Activated B cell treated with CpG ODN at 0.5 μM for 24 hours (primary cell): ENCODE measurements at regions of chr3 and their contacts with region 1.

Region 1: GRCh38 chr3:179432021-179432420 is 19.2 kb downstream of the GNB4 start:
- DNase-seq: peak; percentile 19
- ATAC-seq: peak; percentile 70
- H3K4me3 Mint-ChIP-seq: peak overlapping the region; percentile 44
- H3K27ac Mint-ChIP-seq: peak overlapping the region; percentile 75
- H3K4me1 Mint-ChIP-seq: peaks cover 59% of the 10 kb centered on the region
- H3K27me3 Mint-ChIP-seq: no peaks in the 10 kb centered on the region
- CTCF ChIP-seq: no peak

Region 2: DNA sequence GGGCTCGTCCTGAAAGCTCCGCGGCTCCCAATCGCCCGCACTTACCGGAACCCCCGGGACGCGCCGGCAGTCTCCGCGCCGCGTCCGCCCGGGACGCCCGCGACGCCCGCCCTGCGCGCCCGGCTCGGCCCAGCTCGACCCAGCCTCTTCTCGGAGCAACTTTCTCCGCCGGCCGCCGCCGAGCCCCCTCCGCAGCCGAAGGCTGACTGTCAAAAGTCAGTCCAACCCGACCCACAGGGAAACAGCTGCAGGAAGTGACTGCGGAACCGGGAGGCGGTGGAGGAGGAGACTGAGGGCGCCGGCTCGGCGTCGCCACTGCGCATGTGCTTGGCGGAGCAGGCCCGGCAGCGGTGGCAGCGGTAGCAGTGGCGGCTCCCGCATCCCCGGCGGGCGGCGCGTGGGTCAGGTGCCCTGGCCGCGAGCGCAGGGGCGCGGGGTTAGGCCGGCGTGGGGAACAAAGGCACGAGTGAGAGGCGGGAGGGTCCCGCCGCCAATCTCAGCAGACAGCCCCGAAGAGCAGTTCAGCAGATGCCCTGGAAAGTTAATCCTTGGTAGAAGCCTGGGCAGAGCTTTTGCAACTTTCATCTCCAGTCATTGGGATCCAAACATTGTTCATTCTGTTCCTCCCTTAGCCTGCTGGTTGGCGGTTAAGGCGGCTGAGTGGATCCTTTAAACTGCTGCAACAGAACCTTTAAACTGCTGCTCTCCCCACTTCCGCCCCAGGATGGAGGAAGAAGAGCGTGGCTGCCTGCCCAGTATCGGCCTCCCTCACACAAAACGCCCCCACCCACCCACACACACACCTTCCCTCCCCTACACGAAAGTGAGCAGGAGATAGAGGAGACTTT is 360.2 kb before region 1 on chr3 and contains the start of gene ZMAT3:
- CTCF ChIA-PET with region 1: no interaction called
- POLR2A ChIA-PET with region 1: interaction called, 8 read pairs
- intact Hi-C with region 1: loop called (anchors 10 kb)
- DNase-seq: peak; percentile 82
- ATAC-seq: peak; percentile 74
- H3K4me3 Mint-ChIP-seq: peak within 1 kb of the TSS; percentile 96
- H3K27ac Mint-ChIP-seq: peak within 1 kb of the TSS; percentile 91
- H3K4me1 Mint-ChIP-seq: peaks cover 60% of the 10 kb centered on the region
- H3K27me3 Mint-ChIP-seq: no peaks in the 10 kb centered on the region
- CTCF ChIP-seq: no peak
- total RNA-seq, gene ZMAT3: 29.8 and 32.0 TPM in 2 replicates

Region 3: GRCh38 chr3:179330438-179330837 is 101.6 kb before region 1 on chr3:
- CTCF ChIA-PET with region 1: no interaction called
- POLR2A ChIA-PET with region 1: interaction called, 10 read pairs
- intact Hi-C with region 1: no loop called
- DNase-seq: no peak
- ATAC-seq: no peak
- H3K4me3 Mint-ChIP-seq: no peak overlapping the region
- H3K27ac Mint-ChIP-seq: no peak overlapping the region
- H3K4me1 Mint-ChIP-seq: peaks cover 4% of the 10 kb centered on the region
- H3K27me3 Mint-ChIP-seq: no peaks in the 10 kb centered on the region
- CTCF ChIP-seq: no peak

Region 4: DNA sequence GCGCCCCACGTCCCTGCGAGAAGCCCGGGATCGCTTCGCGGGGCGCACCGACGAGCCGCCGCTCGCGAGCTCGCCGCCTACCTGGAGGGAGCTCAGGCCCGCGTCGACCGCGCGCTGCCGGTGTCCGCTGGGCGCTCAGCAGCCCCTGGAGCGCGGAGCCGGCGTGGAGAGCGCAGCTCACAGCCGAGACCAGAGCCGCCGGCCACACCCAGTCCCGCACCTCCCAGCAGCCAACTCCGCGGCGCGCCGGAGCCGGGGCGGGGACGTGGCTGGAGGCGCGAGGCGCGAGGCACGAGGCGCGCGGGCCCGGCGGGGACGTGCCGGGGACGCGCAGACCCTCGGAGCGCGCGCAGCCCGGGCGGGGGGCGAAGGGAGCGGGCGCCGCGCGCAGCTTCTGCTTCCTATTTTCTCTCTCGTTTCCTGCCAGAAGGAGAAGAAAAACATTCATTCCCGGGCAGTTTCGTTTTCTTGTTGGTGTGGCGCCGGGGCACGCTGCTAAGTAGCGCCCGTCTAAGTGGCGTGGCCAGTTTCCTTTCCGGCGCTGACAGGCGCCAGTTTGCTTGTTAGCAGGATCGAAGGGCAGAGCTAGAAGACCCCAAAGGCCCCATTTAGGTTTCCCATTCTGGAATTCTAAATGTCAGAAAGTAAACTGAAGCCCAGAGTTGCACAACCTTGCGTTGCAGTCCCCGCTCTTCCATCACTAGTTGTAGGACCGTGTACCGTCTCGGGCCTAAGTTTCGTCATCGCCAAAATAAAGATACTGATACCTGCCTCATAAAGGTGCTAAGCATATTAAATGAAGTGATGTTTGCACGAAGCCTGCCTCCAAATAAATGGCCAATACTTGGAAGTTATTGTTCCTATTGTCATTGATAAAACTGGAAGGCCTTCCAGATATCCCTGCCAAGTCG is 19.5 kb after region 1 on chr3 and contains the start of gene GNB4:
- CTCF ChIA-PET with region 1: interaction called, 4 read pairs
- POLR2A ChIA-PET with region 1: interaction called, 6 read pairs
- intact Hi-C with region 1: loop called (anchors 2 kb)
- DNase-seq: peak; percentile 74
- ATAC-seq: peak; percentile 88
- H3K4me3 Mint-ChIP-seq: peak within 1 kb of the TSS; percentile 92
- H3K27ac Mint-ChIP-seq: peak within 1 kb of the TSS; percentile 93
- H3K4me1 Mint-ChIP-seq: peaks cover 35% of the 10 kb centered on the region
- H3K27me3 Mint-ChIP-seq: no peaks in the 10 kb centered on the region
- CTCF ChIP-seq: no peak
- total RNA-seq, gene GNB4: 18.0 and 22.7 TPM in 2 replicates

Region 5: DNA sequence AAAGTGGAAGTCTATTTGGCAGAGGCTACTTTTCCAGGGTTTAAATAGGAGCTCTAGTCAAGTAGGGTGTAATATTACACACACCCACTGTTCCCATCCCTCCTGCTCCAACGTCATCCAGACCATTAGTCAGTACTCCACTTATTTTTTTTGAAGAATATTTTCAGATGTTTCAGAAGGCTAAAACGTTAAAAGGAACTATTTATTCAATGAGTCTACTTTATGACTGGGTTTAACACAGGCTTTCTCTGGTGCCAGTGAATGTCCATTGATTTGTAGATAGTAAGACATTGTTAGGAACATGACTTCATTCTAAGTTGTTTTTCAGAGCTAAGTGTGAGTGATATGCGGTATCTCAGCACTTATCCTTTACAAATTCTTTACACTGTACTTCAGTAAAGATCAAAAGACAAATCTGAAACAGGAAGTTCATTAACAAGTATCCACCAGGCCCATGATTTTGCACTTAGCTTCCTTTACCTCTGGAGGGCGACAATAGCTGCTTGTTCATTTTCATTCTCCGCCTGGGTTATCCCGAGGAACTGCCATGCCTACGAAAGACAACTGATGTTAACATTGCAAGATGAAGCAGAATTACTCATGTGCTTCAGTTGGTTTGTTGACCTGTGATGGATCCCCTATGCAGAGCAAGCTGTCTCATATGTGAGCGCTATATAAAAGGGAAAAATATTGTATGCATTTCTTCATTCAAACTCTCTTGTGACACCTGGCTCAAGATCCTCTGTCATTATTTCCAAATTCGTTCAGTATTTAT is 379.5 kb after region 1 on chr3:
- CTCF ChIA-PET with region 1: no interaction called
- POLR2A ChIA-PET with region 1: no interaction called
- intact Hi-C with region 1: no loop called
- DNase-seq: no peak
- ATAC-seq: no peak
- H3K4me3 Mint-ChIP-seq: no peak overlapping the region
- H3K27ac Mint-ChIP-seq: no peak overlapping the region
- H3K4me1 Mint-ChIP-seq: peaks cover 6% of the 10 kb centered on the region
- H3K27me3 Mint-ChIP-seq: peaks cover 2% of the 10 kb centered on the region
- CTCF ChIP-seq: no peak